PC-3 (cell line): ENCODE measurements at regions of chr6 and their contacts with region 1.

Region 1: DNA sequence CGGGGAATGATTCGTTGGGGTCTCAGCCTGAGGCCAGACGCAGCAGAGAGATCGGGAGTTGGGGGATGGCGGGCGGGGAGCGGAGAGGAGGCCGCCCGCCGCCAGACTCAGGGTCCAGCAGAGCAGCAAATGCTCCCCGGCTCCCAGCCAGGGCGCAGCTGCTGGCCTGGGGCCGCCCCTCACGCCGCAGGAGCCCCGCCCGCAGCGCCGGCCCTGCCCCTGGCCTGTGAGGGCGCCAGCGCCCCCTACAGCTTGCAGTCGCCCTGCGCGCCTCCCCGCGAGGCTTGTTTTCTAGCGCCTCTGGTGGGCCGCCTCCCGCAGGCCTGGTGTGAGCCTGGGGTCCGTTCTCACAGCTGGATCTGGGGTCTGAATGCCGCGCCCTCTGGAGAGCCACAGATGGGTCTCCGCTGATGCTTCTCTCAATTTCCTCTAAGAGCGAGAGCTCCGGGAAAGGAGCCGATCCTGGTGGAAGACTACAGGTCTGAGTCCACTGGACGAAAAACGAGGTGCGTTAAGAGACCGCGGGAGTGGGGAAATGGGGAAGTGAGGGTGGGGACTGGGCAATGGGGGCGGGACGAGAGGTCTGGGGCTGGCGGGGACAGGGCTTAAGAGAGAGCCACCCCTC is 29.9 kb downstream of the TRIM38 start:
- DNase-seq: peak; percentile 95
- ATAC-seq: peak; percentile 92
- H3K4me3 ChIP-seq: peak overlapping the region; percentile 96
- H3K27ac ChIP-seq: peak overlapping the region; percentile 51
- H3K4me1 ChIP-seq: peaks cover 6% of the 10 kb centered on the region; the same call in 1 of the 2 replicates
- H3K27me3 ChIP-seq: no peaks in the 10 kb centered on the region
- CTCF ChIP-seq: peak; percentile 98

Region 2: DNA sequence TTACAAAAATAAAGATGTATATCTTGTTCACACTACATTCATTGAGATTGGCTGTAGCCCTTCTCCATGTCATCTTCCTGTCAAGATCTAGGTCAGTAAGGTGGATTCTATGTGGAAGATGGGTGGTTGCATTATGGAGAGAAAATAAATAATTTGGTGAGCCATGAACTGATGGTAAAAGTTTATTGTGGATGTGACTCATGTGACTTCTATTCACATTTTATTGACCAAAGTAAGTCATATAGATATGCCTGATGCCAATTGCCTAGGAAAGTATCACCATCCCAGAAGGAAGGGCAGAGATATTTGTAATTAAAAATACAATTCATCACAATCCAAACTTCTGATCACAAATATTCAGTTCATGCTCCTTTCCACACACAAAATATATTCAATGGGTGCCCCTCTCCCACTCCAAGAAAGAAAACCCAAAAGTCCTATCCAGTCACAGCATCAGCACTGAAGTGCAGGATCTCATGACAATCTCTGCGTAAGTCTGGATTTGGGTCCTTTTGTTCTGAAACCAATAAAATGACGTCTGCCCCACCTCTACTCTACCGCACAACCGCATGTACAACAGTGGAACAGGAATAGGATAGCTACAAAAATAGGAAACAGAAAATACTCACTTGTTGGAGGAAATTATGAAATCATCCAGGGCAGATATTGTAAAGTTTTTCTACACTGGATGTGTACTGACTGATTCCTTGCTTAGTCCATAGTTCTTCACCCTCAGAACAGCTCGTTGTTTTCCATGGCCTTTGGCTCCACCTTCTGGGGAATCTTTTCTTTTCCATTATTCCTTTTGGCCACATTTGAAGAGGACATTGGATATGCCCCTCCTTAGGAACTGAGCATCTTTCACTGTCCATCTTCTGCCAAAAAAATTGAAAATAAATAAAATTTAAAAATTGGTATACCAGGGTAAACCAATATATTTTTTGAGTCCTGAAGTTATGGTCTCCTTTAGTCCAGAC is 102.4 kb before region 1 on chr6:
- CTCF ChIA-PET with region 1: interaction called, 3 read pairs
- POLR2A ChIA-PET with region 1: no interaction called
- intact Hi-C with region 1: loop called (anchors 5 kb)
- DNase-seq: peak; percentile 75
- ATAC-seq: peak; percentile 87
- H3K4me3 ChIP-seq: no peak overlapping the region
- H3K27ac ChIP-seq: no peak overlapping the region
- H3K4me1 ChIP-seq: peaks cover 11% of the 10 kb centered on the region
- H3K27me3 ChIP-seq: peaks cover 27% of the 10 kb centered on the region; the same call in 1 of the 2 replicates
- CTCF ChIP-seq: peak; percentile 81